Activated CD4-positive, alpha-beta memory T cell treated with anti-CD3 and anti-CD28 coated beads, Interleukin-2, amount 10 ng/mL, durations not matched to agents 7 days and 5 days (primary cell): ENCODE measurements at regions of chr4 and their contacts with region 1.

Region 1: GRCh38 chr4:40309250-40309774 is 25.8 kb upstream of the CHRNA9 start:
- DNase-seq: peak; percentile 92
- H3K4me3 Mint-ChIP-seq: peak overlapping the region; percentile 73
- H3K27ac Mint-ChIP-seq: peak overlapping the region; percentile 98
- H3K4me1 Mint-ChIP-seq: peaks cover 71% of the 10 kb centered on the region
- H3K27me3 Mint-ChIP-seq: peaks cover 5% of the 10 kb centered on the region

Region 2: DNA sequence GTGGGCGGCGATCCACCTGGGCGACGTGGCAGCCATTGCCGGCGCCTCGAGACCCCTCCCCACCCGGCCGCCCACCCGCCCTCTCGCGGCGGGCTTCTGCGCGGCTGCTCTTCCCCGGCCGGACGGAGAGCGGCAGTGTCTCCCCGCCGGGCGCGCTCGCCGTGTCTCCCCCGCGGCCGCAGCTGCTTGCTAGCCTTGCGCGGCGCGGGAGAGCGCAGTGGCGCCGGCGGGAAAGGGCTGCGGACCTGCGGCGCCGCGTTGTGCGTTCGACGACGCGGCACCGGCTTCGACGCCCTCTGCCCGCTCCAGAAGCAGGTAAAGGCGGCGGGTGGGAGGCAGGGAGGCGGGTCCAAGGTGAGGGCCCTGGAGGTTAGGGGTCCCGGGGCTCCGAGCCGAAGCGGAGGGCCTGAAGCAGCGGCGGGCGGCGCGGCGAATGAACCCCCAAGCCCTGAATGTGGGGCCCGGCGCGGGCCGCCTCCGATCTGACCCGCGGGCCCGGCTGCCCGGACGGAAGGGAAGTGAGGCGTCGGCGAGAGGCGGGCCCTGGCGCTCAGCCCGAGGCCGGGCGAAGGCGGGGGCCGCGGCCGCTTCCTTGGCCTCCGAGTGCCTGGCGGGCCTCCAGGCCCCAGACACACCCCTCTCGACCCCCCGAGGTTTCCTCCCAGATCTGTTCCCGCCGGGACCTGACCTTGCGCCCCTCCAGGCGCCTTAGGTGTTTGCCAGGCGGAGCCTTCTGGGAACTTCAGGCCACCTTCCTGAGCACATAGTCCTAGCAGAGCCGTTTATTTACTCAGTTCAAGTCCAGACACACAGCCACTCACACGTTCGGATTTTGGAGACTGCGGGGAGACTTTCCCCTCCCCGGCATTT is 252.4 kb before region 1 on chr4 and contains the start of gene N4BP2:
- CTCF ChIA-PET with region 1: interaction called, 22 read pairs
- POLR2A ChIA-PET with region 1: interaction called, 26 read pairs
- DNase-seq: peak; percentile 75
- H3K4me3 Mint-ChIP-seq: peak within 1 kb of the TSS; percentile 97
- H3K27ac Mint-ChIP-seq: peak within 1 kb of the TSS; percentile 99
- H3K4me1 Mint-ChIP-seq: peaks cover 37% of the 10 kb centered on the region
- H3K27me3 Mint-ChIP-seq: no peaks in the 10 kb centered on the region
- total RNA-seq, gene N4BP2: 22.5 to 26.8 TPM

Region 3: DNA sequence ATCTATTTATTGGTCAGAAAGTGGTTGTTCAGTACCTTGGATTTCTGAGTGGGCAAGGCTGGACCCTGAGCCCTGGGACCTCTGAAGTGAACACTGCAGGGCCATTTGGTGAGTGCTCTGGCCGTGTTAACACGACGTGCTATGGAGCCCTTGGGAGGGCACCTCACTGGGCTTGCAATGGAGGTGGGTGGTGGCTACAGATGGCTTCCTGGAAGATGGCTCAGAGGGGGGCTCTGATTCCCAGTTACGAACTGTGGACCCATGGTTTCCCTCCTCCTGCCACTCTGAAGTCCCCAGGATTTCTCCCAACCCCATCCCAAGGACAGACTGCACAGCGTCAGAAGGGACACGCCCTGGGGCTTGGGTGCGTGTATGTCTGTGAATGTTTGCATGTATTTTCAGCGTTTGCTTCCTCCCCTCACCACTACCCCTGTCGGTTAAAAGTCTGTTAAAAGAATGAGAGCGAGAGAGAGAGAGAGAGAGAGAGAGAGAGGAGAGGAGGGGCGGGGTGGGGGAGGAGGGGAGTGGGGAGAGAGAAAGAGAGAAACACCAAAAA is 116.2 kb before region 1 on chr4:
- CTCF ChIA-PET with region 1: interaction called, 20 read pairs
- POLR2A ChIA-PET with region 1: interaction called, 143 read pairs
- DNase-seq: no peak
- H3K4me3 Mint-ChIP-seq: peak overlapping the region; percentile 97
- H3K27ac Mint-ChIP-seq: peak overlapping the region; percentile 99
- H3K4me1 Mint-ChIP-seq: peaks cover 67% of the 10 kb centered on the region
- H3K27me3 Mint-ChIP-seq: no peaks in the 10 kb centered on the region

Region 4: GRCh38 chr4:40205259-40206198 is 103.8 kb before region 1 on chr4:
- CTCF ChIA-PET with region 1: interaction called, 20 read pairs
- POLR2A ChIA-PET with region 1: interaction called, 143 read pairs
- DNase-seq: peak; percentile 66
- H3K4me3 Mint-ChIP-seq: peak overlapping the region; percentile 97
- H3K27ac Mint-ChIP-seq: peak overlapping the region; percentile 99
- H3K4me1 Mint-ChIP-seq: peaks cover 64% of the 10 kb centered on the region
- H3K27me3 Mint-ChIP-seq: no peaks in the 10 kb centered on the region

Region 5: GRCh38 chr4:40228497-40229365 is 80.6 kb before region 1 on chr4:
- CTCF ChIA-PET with region 1: interaction called, 97 read pairs
- POLR2A ChIA-PET with region 1: interaction called, 32 read pairs
- DNase-seq: no peak
- H3K4me3 Mint-ChIP-seq: peak overlapping the region; percentile 57
- H3K27ac Mint-ChIP-seq: peak overlapping the region; percentile 75
- H3K4me1 Mint-ChIP-seq: peaks cover 95% of the 10 kb centered on the region
- H3K27me3 Mint-ChIP-seq: no peaks in the 10 kb centered on the region

Region 6: GRCh38 chr4:40247350-40247749 is 62.0 kb before region 1 on chr4:
- CTCF ChIA-PET with region 1: interaction called, 12 read pairs
- POLR2A ChIA-PET with region 1: interaction called, 14 read pairs
- DNase-seq: peak; percentile 80
- H3K4me3 Mint-ChIP-seq: peak overlapping the region; percentile 2
- H3K27ac Mint-ChIP-seq: peak overlapping the region; percentile 89
- H3K4me1 Mint-ChIP-seq: peaks cover 84% of the 10 kb centered on the region
- H3K27me3 Mint-ChIP-seq: no peaks in the 10 kb centered on the region

Region 7: GRCh38 chr4:40289366-40290188 is 19.7 kb before region 1 on chr4:
- CTCF ChIA-PET with region 1: interaction called, 17 read pairs
- POLR2A ChIA-PET with region 1: interaction called, 22 read pairs
- DNase-seq: no peak
- H3K4me3 Mint-ChIP-seq: peak overlapping the region; percentile 40
- H3K27ac Mint-ChIP-seq: peak overlapping the region; percentile 87
- H3K4me1 Mint-ChIP-seq: peaks cover 39% of the 10 kb centered on the region
- H3K27me3 Mint-ChIP-seq: no peaks in the 10 kb centered on the region